ENCODE measurements at regions of chr6 and their contacts with region 1.

Region 1: DNA sequence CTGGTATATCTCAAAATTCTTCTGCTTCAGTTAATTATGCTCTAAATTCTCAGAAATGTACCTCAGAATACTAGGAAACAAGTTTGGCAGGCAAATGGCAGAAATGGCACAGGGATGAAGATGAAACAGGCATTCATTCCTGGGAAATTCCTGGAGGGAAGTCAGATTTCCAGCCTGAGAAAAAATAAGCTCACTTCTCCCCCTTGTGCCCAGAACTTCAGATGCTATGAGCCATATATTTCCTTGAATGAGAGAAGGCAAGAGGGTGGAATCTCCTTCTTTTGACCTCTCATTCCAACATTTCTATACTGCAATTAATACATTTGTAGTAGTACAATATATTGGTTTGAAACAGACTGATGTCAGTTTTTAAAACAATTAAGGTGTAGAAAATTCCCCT is 22.8 kb downstream of the RGS17 start:
- DNase-seq: peak; percentile 57
- H3K4me3 Mint-ChIP-seq: no peak overlapping the region
- H3K27ac Mint-ChIP-seq: no peak overlapping the region
- H3K4me1 Mint-ChIP-seq: peaks cover 16% of the 10 kb centered on the region
- H3K27me3 Mint-ChIP-seq: no peaks in the 10 kb centered on the region
- CTCF ChIP-seq: peak; percentile 30

Region 2: GRCh38 chr6:153059761-153060160 is 48.6 kb before region 1 on chr6:
- CTCF ChIA-PET with region 1: interaction called, 4 read pairs
- POLR2A ChIA-PET with region 1: no interaction called
- intact Hi-C with region 1: loop called (anchors 1 kb)
- DNase-seq: peak; percentile 25
- H3K4me3 Mint-ChIP-seq: no peak overlapping the region
- H3K27ac Mint-ChIP-seq: no peak overlapping the region
- H3K4me1 Mint-ChIP-seq: no peaks in the 10 kb centered on the region
- H3K27me3 Mint-ChIP-seq: no peaks in the 10 kb centered on the region
- CTCF ChIP-seq: peak; percentile 13

Measured in MCF 10A (cell line).